Activated CD4-positive, alpha-beta T cell treated with anti-CD3 and anti-CD28 coated beads for 36 hours (primary cell): ENCODE measurements at regions of chr20 and their contacts with region 1.

Region 1: DNA sequence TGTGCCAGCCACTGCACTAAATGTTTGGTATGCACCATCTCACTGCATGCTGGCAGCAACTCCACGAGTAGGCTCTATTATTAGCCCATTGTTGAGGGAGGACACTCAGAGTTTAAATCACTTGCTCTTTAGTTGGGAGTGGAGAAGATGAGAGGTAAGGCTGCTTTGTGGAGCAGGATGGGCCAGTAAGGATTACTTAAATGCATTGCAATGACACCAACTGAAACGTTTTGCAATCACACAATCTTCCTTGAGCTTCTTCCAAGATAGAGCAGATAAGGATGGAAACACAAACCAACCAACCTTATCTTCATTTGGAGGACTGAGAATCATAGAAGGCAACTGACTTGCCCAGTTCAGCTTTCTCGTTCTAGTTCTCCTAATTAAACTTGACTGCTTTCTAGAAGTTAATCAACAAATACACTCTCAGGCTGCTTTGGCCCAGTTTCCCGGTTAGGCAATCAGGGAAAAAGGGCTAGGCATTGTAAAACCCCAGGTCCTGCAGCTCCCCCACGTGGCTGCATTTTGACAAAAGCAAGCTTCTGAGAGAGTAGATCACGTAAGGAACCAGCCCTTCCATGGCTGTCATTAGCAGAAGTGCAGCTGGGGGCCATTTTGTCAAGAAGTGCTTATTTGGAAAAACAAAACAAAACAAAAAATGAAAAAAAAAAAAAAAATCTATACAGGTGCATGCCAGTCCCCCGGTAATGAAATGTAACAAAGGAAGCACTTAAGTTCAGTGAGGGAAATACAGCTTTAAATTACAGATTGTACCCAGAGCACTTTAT is 130.6 kb downstream of the BCAS1 start:
- DNase-seq: peak; percentile 88
- ATAC-seq: peak; percentile 88
- H3K4me3 Mint-ChIP-seq: no peak overlapping the region
- H3K27ac Mint-ChIP-seq: no peak overlapping the region
- H3K4me1 Mint-ChIP-seq: peaks cover 37% of the 10 kb centered on the region
- H3K27me3 Mint-ChIP-seq: no peaks in the 10 kb centered on the region

Region 2: DNA sequence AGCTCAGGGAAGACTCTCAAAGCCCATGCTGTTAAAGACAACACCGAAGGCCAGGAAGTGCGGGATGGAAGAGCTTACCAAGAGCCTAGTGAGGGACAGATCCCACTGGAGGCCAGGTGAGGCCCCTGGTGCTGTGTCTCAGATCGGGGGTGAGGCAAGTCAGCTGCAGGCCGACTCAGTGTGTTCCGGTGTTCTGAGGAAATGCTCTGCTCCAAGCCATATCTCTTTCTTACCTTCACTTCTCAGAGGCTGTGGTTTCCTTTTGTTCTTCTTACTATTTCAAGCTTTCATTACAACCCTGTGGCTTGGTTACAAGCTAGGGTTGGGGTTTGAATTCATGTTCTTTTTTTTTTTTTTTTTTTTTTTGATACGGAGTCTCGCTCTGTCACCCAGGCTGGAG is 1633.9 kb before region 1 on chr20:
- CTCF ChIA-PET with region 1: no interaction called
- POLR2A ChIA-PET with region 1: no interaction called
- intact Hi-C with region 1: loop called in 1 of 2 experiments (anchors 10 kb)
- DNase-seq: peak; percentile 49
- ATAC-seq: peak; percentile 87
- H3K4me3 Mint-ChIP-seq: no peak overlapping the region
- H3K27ac Mint-ChIP-seq: peak overlapping the region; percentile 45
- H3K4me1 Mint-ChIP-seq: peaks cover 56% of the 10 kb centered on the region
- H3K27me3 Mint-ChIP-seq: no peaks in the 10 kb centered on the region

Region 3: GRCh38 chr20:52800734-52801627 is 1138.8 kb before region 1 on chr20:
- CTCF ChIA-PET with region 1: no interaction called
- POLR2A ChIA-PET with region 1: no interaction called
- intact Hi-C with region 1: no loop called
- DNase-seq: no peak
- ATAC-seq: no peak
- H3K4me3 Mint-ChIP-seq: no peak overlapping the region
- H3K27ac Mint-ChIP-seq: no peak overlapping the region
- H3K4me1 Mint-ChIP-seq: no peaks in the 10 kb centered on the region
- H3K27me3 Mint-ChIP-seq: peaks cover 2% of the 10 kb centered on the region

Region 4: GRCh38 chr20:53226826-53227225 is 712.9 kb before region 1 on chr20:
- CTCF ChIA-PET with region 1: no interaction called
- POLR2A ChIA-PET with region 1: no interaction called
- intact Hi-C with region 1: loop called in 1 of 2 experiments (anchors 10 kb)
- DNase-seq: no peak
- ATAC-seq: no peak
- H3K4me3 Mint-ChIP-seq: no peak overlapping the region
- H3K27ac Mint-ChIP-seq: no peak overlapping the region
- H3K4me1 Mint-ChIP-seq: peaks cover 18% of the 10 kb centered on the region
- H3K27me3 Mint-ChIP-seq: peaks cover 4% of the 10 kb centered on the region

Region 5: GRCh38 chr20:53578492-53579222 is 361.1 kb before region 1 on chr20:
- CTCF ChIA-PET with region 1: interaction called, 15 read pairs
- POLR2A ChIA-PET with region 1: no interaction called
- intact Hi-C with region 1: loop called (anchors 1 kb)
- DNase-seq: peak; percentile 62
- ATAC-seq: peak; percentile 45
- H3K4me3 Mint-ChIP-seq: peak overlapping the region; percentile 70
- H3K27ac Mint-ChIP-seq: peak overlapping the region; percentile 83
- H3K4me1 Mint-ChIP-seq: peaks cover 91% of the 10 kb centered on the region
- H3K27me3 Mint-ChIP-seq: no peaks in the 10 kb centered on the region

Region 6: DNA sequence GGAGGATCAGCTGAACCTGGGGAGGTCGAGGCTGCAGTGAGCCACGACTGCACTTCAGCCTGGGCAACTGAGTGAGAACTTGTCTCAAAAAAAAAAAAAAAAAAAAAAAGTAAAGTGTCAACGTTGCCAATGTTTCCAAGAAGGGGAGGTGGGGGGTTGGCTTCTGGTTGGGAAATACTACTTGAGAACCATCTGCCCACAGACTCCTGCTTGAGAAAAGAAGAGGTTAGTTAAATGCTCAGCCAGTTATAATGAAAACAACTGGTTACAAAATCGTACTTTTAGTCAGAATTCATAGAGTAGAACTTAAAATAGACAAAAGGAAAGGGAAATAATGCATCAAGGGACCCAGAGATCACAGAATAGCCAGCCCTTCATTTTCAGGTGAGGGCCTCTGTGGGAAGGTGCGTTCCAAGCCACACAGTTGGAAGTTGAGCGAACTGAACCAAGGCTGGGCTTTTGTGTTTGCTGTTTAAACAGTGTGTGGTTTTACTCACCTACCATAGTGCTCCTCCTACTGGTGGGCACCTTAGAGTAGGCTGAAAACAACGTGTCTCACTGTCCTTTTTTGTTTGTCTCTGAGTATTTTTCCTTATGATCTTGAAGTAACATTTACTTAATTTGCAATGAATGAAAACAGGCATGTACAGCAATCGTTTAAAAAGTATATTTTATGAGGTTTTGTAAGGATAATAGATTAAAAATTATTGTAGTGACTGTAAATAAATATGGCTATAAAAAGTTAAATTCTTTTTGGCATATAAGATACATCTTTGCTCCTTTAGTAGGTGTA is 70.1 kb before region 1 on chr20:
- CTCF ChIA-PET with region 1: interaction called, 3 read pairs
- POLR2A ChIA-PET with region 1: no interaction called
- intact Hi-C with region 1: loop called in 1 of 2 experiments (anchors 5 kb)
- DNase-seq: peak; percentile 83
- ATAC-seq: peak; percentile 84
- H3K4me3 Mint-ChIP-seq: peak overlapping the region; percentile 18
- H3K27ac Mint-ChIP-seq: peak overlapping the region; percentile 90
- H3K4me1 Mint-ChIP-seq: peaks cover 75% of the 10 kb centered on the region
- H3K27me3 Mint-ChIP-seq: no peaks in the 10 kb centered on the region

Region 7: DNA sequence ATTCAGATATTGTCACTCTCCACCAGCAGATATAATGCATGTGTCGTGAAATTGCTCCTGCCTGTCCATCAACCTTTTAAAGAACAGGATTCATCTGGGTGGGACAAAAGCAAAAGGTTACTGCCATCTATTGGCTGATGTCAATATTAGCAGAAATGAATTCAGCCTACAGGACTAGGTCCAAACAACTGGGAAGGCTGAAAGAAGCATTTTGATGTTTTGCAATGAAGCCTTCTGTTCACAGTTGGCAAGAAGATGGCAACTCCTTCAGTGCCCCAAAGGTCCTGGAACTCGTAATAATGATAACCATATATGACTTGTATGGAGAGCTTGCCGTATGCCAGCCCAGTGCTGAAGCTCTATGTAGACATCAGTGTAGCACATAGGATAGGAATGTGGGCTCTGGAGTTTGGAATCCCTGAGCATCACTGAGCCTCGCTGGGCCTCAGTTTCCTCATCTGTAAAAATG is 123.1 kb after region 1 on chr20:
- CTCF ChIA-PET with region 1: no interaction called
- POLR2A ChIA-PET with region 1: no interaction called
- intact Hi-C with region 1: loop called (anchors 2 to 5 kb)
- DNase-seq: no peak
- ATAC-seq: peak; percentile 54
- H3K4me3 Mint-ChIP-seq: no peak overlapping the region
- H3K27ac Mint-ChIP-seq: no peak overlapping the region
- H3K4me1 Mint-ChIP-seq: peaks cover 15% of the 10 kb centered on the region
- H3K27me3 Mint-ChIP-seq: no peaks in the 10 kb centered on the region